PC-3 (cell line): ENCODE measurements at regions of chr5 and their contacts with region 1.

Region 1: GRCh38 chr5:127564002-127564769 is 46.7 kb downstream of the PRRC1 start:
- DNase-seq: peak; percentile 77
- ATAC-seq: peak; percentile 89
- H3K4me3 ChIP-seq: no peak overlapping the region
- H3K27ac ChIP-seq: no peak overlapping the region
- H3K4me1 ChIP-seq: no peaks in the 10 kb centered on the region
- H3K27me3 ChIP-seq: peaks cover 28% of the 10 kb centered on the region; the same call in 1 of the 2 replicates
- CTCF ChIP-seq: peak; percentile 91

Region 2: GRCh38 chr5:127746756-127747155 is 182.6 kb after region 1 on chr5:
- CTCF ChIA-PET with region 1: no interaction called
- POLR2A ChIA-PET with region 1: no interaction called
- intact Hi-C with region 1: loop called (anchors 5 kb)
- DNase-seq: peak; percentile 69
- ATAC-seq: peak; percentile 92
- H3K4me3 ChIP-seq: no peak overlapping the region
- H3K27ac ChIP-seq: no peak overlapping the region
- H3K4me1 ChIP-seq: no peaks in the 10 kb centered on the region
- H3K27me3 ChIP-seq: peaks cover 20% of the 10 kb centered on the region
- CTCF ChIP-seq: peak; percentile 81

Region 3: DNA sequence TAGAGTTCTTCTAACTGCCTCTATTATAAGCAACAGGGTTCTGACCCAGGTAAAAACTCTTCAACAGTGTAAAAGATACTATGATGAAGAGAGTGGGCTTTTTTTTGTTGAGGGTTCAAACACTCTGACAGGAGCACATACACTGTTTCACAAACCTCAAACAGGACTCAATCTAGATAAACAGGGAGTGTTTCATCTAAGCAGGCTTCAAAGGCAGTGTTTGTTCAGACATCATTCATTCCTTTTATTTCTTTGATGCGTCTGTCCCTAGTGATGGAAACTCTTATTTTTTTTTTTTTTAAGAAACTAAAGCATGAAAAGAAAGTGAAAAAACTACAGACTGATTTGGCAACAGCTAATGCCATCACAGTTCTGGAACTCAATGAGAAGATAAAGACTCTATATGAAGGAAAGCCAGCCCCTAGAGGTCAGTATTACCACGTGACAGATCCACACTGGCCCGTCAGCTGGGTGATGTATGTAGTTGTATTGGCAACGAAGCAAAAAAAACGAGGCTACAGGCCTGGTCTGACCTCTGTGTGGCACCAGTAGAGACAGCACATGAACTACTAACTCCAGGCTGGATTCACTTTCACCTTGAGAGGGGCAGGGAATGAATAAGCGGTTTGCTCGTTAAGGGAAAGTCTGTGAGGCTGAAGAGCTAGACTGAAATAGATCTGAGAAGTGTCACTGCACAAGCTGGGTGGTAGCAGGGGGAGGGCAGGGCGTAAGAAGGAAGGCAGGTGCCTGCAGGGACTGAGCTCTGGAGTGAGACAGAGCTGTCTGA is 311.2 kb after region 1 on chr5:
- CTCF ChIA-PET with region 1: no interaction called
- POLR2A ChIA-PET with region 1: no interaction called
- intact Hi-C with region 1: loop called (anchors 5 kb)
- DNase-seq: peak; percentile 78
- ATAC-seq: peak; percentile 76
- H3K4me3 ChIP-seq: no peak overlapping the region
- H3K27ac ChIP-seq: 0 out of 2 replicates have a peak overlapping the region, but pooled peaks have one; percentile 9
- H3K4me1 ChIP-seq: peaks cover 17% of the 10 kb centered on the region
- H3K27me3 ChIP-seq: no peaks in the 10 kb centered on the region
- CTCF ChIP-seq: peak; percentile 73

Region 4: DNA sequence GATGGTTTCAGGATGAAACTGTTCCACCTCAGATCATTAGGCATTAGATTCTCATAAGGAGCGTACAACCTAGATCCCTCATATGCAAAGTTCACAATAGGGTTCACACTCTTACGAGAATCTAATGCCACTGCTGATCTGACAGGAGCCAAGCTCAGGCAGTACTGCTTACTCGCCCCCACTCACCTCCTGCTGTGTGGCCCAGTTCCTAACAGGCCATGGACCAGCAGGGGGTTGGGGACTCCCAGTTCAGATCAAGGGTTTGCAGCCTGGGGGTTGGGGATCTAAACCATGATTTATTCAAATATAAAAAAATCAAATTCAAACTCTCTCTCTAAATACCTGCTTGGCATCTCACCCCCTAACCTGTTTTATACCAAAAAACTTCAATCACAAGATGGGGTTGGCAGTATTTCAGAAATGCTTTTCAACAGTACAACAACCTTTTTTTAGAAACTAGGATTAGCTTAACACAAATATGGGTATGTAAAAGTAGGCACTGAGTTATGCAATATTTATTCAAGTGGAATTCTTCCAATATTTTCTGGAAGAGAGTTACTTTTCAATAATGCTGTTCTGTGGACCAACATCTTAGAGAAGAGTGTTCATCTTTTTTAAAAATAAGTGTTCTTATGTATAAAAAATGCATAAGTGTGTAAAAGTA is 489.2 kb after region 1 on chr5:
- CTCF ChIA-PET with region 1: no interaction called
- POLR2A ChIA-PET with region 1: no interaction called
- intact Hi-C with region 1: loop called (anchors 5 kb)
- DNase-seq: peak; percentile 51
- ATAC-seq: peak; percentile 66
- H3K4me3 ChIP-seq: no peak overlapping the region
- H3K27ac ChIP-seq: peak overlapping the region; percentile 23
- H3K4me1 ChIP-seq: peaks cover 24% of the 10 kb centered on the region
- H3K27me3 ChIP-seq: no peaks in the 10 kb centered on the region
- CTCF ChIP-seq: no peak

Region 5: DNA sequence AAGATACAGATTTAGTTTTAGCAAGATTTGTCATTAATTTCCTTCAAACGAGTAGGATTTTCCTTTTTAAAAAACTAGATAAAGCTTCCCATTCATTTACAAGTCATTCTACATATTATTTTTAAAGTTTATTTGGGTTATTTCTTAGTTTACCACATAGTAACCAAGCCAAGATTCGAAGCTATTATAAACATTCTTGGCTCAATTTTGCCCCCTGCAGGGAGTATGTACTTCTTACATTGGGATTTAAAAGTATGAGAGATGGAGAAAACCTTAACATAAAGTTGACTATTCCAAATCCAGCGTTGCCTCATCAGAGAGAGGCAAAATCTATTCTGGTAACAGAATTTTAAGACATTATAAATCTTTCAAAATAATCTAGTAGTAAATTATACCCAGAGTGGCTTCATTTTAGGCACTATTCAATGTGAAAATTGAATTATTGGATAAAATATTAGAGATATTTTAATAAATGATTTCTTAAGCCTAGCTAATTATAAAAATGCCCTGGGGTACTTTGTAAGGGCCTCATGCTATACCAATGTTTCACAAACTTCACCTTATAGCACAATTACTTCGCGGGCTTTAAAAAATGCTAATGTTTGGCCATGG is 934.8 kb after region 1 on chr5:
- CTCF ChIA-PET with region 1: no interaction called
- POLR2A ChIA-PET with region 1: no interaction called
- intact Hi-C with region 1: loop called (anchors 10 kb)
- DNase-seq: peak; percentile 70
- ATAC-seq: no peak
- H3K4me3 ChIP-seq: no peak overlapping the region
- H3K27ac ChIP-seq: no peak overlapping the region
- H3K4me1 ChIP-seq: peaks cover 5% of the 10 kb centered on the region; the same call in 1 of the 2 replicates
- H3K27me3 ChIP-seq: no peaks in the 10 kb centered on the region
- CTCF ChIP-seq: peak; percentile 77